ENCODE measurements at regions of chr16 and their contacts with region 1.

Region 1: GRCh38 chr16:89602273-89602951 is 11.0 kb upstream of the DPEP1 start:
- DNase-seq: no peak
- ATAC-seq: peak; percentile 87
- H3K4me3 ChIP-seq: peak overlapping the region in 1 of 2 experiments; percentile 5; a peak in 1 of 4 replicates
- H3K27ac ChIP-seq: peak overlapping the region; percentile 34
- H3K4me1 ChIP-seq: peaks cover 6% of the 10 kb centered on the region
- H3K27me3 ChIP-seq: no peaks in the 10 kb centered on the region
- CTCF ChIP-seq: no peak

Region 2: DNA sequence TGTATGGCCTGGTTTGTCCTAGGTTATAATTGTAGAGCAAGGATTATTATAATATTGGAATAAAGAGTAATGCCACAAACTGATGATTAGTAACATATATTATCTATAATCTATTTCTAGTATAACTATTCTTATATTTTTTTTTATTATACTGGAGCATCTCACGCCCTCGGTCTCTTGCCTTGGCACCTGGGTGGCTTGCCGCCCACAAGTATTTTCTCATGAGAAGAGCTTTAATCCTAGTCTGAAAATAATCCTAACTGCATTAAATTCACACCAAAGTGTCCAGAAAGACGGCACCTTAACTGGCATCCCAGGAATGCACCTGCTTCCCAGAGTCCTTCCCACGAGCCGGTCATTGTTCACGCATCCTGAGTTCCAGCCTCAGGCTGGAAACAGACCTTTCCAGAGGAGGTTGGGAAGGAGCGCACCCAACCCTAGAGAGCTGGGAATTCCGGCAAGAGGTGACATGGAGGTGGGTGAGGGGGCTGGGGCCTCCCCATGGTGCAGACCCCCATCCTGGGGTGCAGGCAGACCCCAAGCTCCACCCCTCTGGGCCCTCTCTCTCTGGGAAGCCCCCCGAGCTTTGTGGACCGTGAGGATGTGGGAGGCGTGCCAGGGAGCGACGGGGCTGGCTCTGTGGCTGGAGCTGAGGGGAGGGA is 39.2 kb after region 1 on chr16:
- CTCF ChIA-PET with region 1: no interaction called
- POLR2A ChIA-PET with region 1: no interaction called
- in situ Hi-C with region 1: no loop called
- intact Hi-C with region 1: loop called (anchors 5 kb)
- DNase-seq: no peak
- ATAC-seq: no peak
- H3K4me3 ChIP-seq: no peak overlapping the region
- H3K27ac ChIP-seq: no peak overlapping the region
- H3K4me1 ChIP-seq: peaks cover 7% of the 10 kb centered on the region
- H3K27me3 ChIP-seq: no peaks in the 10 kb centered on the region
- CTCF ChIP-seq: no peak

Region 3: GRCh38 chr16:89697616-89698331 is 95.4 kb after region 1 on chr16:
- CTCF ChIA-PET with region 1: no interaction called
- POLR2A ChIA-PET with region 1: interaction called, 11 read pairs
- in situ Hi-C with region 1: no loop called
- intact Hi-C with region 1: no loop called
- DNase-seq: no peak
- ATAC-seq: no peak
- H3K4me3 ChIP-seq: no peak overlapping the region
- H3K27ac ChIP-seq: no peak overlapping the region
- H3K4me1 ChIP-seq: peaks cover 4% of the 10 kb centered on the region; the same call in 1 of the 2 replicates
- H3K27me3 ChIP-seq: no peaks in the 10 kb centered on the region
- CTCF ChIP-seq: no peak